H1 (cell line): ENCODE measurements at regions of chr4 and their contacts with region 1.

Region 1: DNA sequence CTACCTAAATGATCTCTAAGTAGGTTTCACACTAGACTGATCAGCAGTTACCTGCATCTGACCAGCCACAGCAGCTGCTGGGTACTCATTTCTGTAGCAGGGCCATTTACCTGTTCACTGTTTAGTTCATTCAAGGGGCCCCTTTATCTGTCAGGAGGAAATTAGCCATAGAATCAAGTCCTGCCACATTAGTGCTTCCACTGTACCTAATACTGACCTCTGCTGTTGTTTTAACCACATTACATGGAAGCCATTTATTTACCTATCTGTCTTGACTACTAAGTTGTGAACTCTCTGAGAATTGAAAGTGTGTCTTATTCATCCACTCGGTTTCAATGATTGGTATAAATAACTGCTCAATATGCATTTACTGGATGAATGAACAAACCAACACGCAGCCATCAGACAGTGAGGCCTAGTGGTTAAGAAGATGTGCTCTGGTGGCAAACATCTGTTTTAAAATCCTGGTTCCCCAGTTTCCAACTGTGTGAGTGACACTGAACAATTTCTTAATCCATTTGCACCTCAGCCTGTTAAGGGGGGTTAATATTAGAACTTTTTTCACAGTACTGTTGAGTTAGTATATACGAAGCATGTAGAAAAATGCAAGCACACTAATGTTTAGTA is 30.0 kb upstream of the ANXA5 start:
- DNase-seq: no peak
- H3K4me3 ChIP-seq: no peak overlapping the region
- H3K27ac ChIP-seq: no peak overlapping the region
- H3K4me1 ChIP-seq: peaks cover 0 to 4% (median 0%) of the 10 kb centered on the region in 4 experiments; a peak in 1 of 7 replicates
- H3K27me3 ChIP-seq: no peaks in the 10 kb centered on the region
- CTCF ChIP-seq: peak in 2 of 3 experiments; percentile 60 to 73; a peak in 3 of 4 replicates
- EP300 ChIP-seq: no peak
- POLR2A ChIP-seq: no peak
- RAD21 ChIP-seq: peak; percentile 78 to 84

Region 2: GRCh38 chr4:121711263-121712000 is 15.3 kb before region 1 on chr4:
- CTCF ChIA-PET with region 1: interaction called, 20 read pairs
- POLR2A ChIA-PET with region 1: no interaction called
- DNase-seq: peak; percentile 84 to 85
- H3K4me3 ChIP-seq: peak overlapping the region in 3 of 4 experiments; percentile 12 to 48 (median 26); a peak in 5 of 8 replicates
- H3K27ac ChIP-seq: peak overlapping the region; percentile 44; the same call in 1 of the 2 replicates
- H3K4me1 ChIP-seq: peaks cover 5 to 10% (median 7%) of the 10 kb centered on the region in 4 experiments; a peak in 5 of 7 replicates
- H3K27me3 ChIP-seq: no peaks in the 10 kb centered on the region
- CTCF ChIP-seq: 0 out of 4 replicates have a peak, but pooled peaks of 1 of the 3 experiments have one; percentile 1
- EP300 ChIP-seq: peak in 1 of 2 experiments; percentile 79; a peak in 1 of 3 replicates
- POLR2A ChIP-seq: 0 out of 3 replicates have a peak, but pooled peaks of 1 of the 2 experiments have one; percentile 36
- RAD21 ChIP-seq: peak; percentile 13 to 14; a peak in 3 of 4 replicates

Region 3: GRCh38 chr4:121736735-121737351 is 10.1 kb after region 1 on chr4:
- CTCF ChIA-PET with region 1: interaction called, 16 read pairs
- POLR2A ChIA-PET with region 1: no interaction called
- DNase-seq: peak in 1 of 2 experiments; percentile 51
- H3K4me3 ChIP-seq: no peak overlapping the region
- H3K27ac ChIP-seq: no peak overlapping the region
- H3K4me1 ChIP-seq: peaks cover 0 to 3% (median 2%) of the 10 kb centered on the region in 4 experiments; a peak in 4 of 7 replicates
- H3K27me3 ChIP-seq: no peaks in the 10 kb centered on the region; a peak in 1 of 7 replicates
- CTCF ChIP-seq: peak in 2 of 3 experiments; percentile 41 to 58; a peak in 3 of 4 replicates
- EP300 ChIP-seq: no peak
- POLR2A ChIP-seq: no peak
- RAD21 ChIP-seq: peak; percentile 73 to 79